Testis (tissue), 5 donors: ENCODE measurements at regions of chr12 and their contacts with region 1.

Region 1: DNA sequence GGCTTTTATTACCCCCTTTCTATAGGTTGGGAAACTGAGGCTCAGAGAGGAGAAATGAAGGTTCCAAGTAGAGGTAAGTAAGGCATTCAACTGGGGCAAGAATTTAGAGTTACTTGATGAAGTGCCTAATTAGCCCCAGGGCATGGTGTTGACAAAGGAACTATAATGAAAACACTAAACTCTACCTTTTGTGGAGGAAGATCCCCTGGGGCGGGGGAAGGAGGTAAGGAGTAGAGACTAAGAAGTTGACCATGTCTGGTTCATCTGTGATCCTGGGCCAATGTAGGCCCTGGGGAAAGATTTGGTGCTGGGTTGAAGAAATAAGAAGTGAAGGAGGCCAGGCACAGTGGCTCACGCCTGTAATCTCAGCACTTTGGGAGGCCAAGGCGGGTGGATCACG is 16.2 kb upstream of the COX6A1 start:
- DNase-seq: no peak
- H3K4me3 ChIP-seq: no peak overlapping the region
- H3K27ac ChIP-seq: no peak overlapping the region
- H3K4me1 ChIP-seq: no peaks in the 10 kb centered on the region
- H3K27me3 ChIP-seq: no peaks in the 10 kb centered on the region
- CTCF ChIP-seq: no peak
- POLR2A ChIP-seq: no peak

Region 2: GRCh38 chr12:120361506-120362208 is 60.0 kb before region 1 on chr12:
- intact Hi-C with region 1: loop called (anchors 10 kb)
- DNase-seq: peak; percentile 71
- H3K4me3 ChIP-seq: peak overlapping the region; percentile 45 to 65
- H3K27ac ChIP-seq: peak overlapping the region in 1 of 2 donors; percentile 15
- H3K4me1 ChIP-seq: peaks cover 10% of the 10 kb centered on the region
- H3K27me3 ChIP-seq: no peaks in the 10 kb centered on the region
- CTCF ChIP-seq: no peak
- POLR2A ChIP-seq: no peak

Region 3: DNA sequence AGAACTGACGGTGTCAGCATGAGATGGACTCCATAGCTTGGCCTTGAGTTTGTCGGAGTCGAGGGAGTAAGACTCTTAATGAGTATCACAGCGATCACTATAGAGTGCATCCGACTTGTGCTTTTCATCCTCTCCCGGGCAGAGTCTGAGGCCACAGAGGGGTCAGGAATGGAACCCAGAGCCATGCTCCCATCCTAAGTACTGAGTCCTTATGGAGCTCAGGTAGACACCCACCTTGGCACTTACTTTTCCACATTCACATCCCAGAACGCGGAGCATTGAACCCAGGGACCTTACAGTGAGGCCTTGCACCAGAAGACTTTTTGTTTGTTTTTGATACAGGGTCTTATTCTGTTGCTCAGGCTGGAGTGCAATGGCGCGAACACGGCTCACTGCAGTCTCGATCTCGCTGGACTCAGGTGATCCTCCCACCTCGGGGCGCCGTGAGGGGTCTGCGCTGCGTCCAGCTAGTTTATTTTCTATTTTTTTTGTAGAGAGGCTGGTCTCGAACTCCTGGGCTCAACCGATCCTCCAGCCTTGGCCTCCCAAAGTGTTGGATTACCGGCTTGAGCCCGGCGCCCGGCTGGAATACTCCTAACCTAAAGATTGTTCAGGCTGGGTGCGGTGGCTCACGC is 48.6 kb after region 1 on chr12:
- intact Hi-C with region 1: no loop called
- DNase-seq: peak; percentile 36
- H3K4me3 ChIP-seq: peak overlapping the region; percentile 97 to 98
- H3K27ac ChIP-seq: peak overlapping the region; percentile 94 to 95
- H3K4me1 ChIP-seq: peaks cover 39% of the 10 kb centered on the region
- H3K27me3 ChIP-seq: no peaks in the 10 kb centered on the region
- CTCF ChIP-seq: no peak
- POLR2A ChIP-seq: no peak